AG04450 (cell line): ENCODE measurements at regions of chr2 and their contacts with region 1.

Region 1: GRCh38 chr2:69330781-69331180 is 56.2 kb downstream of the GFPT1 start:
- DNase-seq: no peak
- H3K4me3 ChIP-seq: no peak overlapping the region
- H3K27ac ChIP-seq: no peak overlapping the region
- H3K27me3 ChIP-seq: no peaks in the 10 kb centered on the region
- CTCF ChIP-seq: no peak

Region 2: DNA sequence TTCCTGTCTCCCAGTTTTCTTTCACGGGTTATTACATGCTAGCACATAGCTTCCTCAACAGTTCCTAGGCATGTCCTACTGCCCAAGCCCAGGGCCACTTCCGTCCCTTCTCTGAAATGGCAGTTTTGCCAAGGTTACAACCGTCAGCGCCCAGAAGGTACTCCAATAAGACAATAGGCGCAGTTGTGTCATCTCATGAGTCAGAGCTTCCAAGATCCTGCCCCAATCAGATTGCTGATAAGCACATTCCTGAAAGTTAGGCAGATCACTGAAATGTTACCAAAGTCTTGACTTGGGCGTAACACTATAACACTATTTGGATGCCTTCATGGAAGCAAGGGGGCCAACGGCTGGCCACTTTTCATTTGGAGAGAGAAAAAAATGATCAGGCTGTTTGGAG is 412.3 kb before region 1 on chr2:
- CTCF ChIA-PET with region 1: no interaction called
- POLR2A ChIA-PET with region 1: no interaction called
- DNase-seq: no peak
- H3K4me3 ChIP-seq: no peak overlapping the region
- H3K27ac ChIP-seq: no peak overlapping the region
- H3K27me3 ChIP-seq: no peaks in the 10 kb centered on the region
- CTCF ChIP-seq: no peak

Region 3: GRCh38 chr2:69344305-69344704 is 13.5 kb after region 1 on chr2:
- CTCF ChIA-PET with region 1: no interaction called
- POLR2A ChIA-PET with region 1: interaction called, 10 read pairs
- DNase-seq: no peak
- H3K4me3 ChIP-seq: no peak overlapping the region
- H3K27ac ChIP-seq: no peak overlapping the region
- H3K27me3 ChIP-seq: no peaks in the 10 kb centered on the region
- CTCF ChIP-seq: no peak

Region 4: DNA sequence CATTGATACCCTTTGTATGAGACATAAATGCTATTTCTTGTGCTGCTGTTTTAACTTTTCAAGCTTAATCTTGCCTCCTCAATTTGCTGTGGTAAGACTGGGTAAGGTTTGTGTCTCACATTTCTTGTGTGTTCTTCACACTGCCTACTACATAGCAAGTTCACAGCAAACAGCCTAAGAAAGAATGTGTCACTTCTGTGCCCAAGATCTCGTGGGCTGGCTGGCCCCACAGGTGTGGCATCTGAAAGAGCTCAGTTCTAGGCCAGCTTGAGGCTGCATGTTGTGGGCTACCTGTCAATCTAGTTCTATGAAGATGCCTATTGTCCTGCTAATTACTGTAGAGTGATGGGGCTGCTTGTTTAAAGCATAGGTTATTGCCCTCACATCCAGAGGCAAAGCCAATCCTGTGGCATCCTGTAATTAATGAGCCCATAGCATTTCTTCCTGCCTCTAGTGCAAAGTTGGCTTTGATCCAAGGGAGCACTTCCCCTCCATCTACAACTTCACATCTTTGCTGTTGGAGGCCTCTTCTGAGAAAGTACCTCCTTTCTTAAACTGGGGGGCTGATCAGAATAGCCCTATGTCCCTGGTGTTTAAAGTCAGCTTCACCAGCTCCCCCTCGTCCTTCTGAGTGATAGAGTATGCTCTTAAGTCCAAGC is 671.6 kb after region 1 on chr2:
- CTCF ChIA-PET with region 1: no interaction called
- POLR2A ChIA-PET with region 1: no interaction called
- DNase-seq: no peak
- H3K4me3 ChIP-seq: no peak overlapping the region
- H3K27ac ChIP-seq: no peak overlapping the region
- H3K27me3 ChIP-seq: no peaks in the 10 kb centered on the region
- CTCF ChIP-seq: no peak